Panc1 (cell line): ENCODE measurements at regions of chr12 and their contacts with region 1.

Region 1: GRCh38 chr12:2276288-2277033 is 223.7 kb downstream of the CACNA1C start:
- DNase-seq: no peak
- ATAC-seq: no peak
- H3K4me3 ChIP-seq: no peak overlapping the region
- H3K27ac ChIP-seq: no peak overlapping the region
- H3K4me1 ChIP-seq: no peaks in the 10 kb centered on the region
- H3K27me3 ChIP-seq: peaks cover 6% of the 10 kb centered on the region; the same call in 1 of the 2 replicates
- CTCF ChIP-seq: no peak

Region 2: DNA sequence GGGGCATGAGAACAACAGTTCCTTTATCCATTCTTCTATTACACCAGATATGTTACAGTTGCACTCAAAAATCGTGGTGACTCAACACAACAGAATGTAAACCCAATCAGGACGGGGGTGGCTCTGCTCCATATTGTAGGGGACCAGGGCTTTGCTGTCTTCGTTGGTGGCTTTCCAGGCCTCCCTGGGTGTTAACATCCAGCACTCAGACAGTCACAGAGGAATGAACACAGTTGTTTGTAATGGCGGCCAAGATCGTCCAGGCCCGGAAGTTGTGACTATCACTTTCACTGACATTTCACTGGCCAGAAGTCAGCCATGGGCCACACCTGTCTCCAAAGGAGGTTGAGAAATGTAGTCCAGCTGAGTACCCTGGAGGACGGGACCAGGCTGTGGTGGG is 19.5 kb before region 1 on chr12:
- CTCF ChIA-PET with region 1: no interaction called
- POLR2A ChIA-PET with region 1: no interaction called
- in situ Hi-C with region 1: no loop called
- intact Hi-C with region 1: no loop called
- DNase-seq: no peak
- ATAC-seq: no peak
- H3K4me3 ChIP-seq: no peak overlapping the region
- H3K27ac ChIP-seq: no peak overlapping the region
- H3K4me1 ChIP-seq: no peaks in the 10 kb centered on the region
- H3K27me3 ChIP-seq: no peaks in the 10 kb centered on the region
- CTCF ChIP-seq: no peak

Region 3: GRCh38 chr12:2320841-2321240 is 44.4 kb after region 1 on chr12:
- CTCF ChIA-PET with region 1: no interaction called
- POLR2A ChIA-PET with region 1: interaction called, 10 read pairs
- in situ Hi-C with region 1: no loop called
- intact Hi-C with region 1: no loop called
- DNase-seq: no peak
- ATAC-seq: no peak
- H3K4me3 ChIP-seq: no peak overlapping the region
- H3K27ac ChIP-seq: no peak overlapping the region
- H3K4me1 ChIP-seq: no peaks in the 10 kb centered on the region
- H3K27me3 ChIP-seq: peaks cover 2% of the 10 kb centered on the region; the same call in 1 of the 2 replicates
- CTCF ChIP-seq: no peak